ENCODE measurements at regions of chr10 and their contacts with region 1.

Region 1: DNA sequence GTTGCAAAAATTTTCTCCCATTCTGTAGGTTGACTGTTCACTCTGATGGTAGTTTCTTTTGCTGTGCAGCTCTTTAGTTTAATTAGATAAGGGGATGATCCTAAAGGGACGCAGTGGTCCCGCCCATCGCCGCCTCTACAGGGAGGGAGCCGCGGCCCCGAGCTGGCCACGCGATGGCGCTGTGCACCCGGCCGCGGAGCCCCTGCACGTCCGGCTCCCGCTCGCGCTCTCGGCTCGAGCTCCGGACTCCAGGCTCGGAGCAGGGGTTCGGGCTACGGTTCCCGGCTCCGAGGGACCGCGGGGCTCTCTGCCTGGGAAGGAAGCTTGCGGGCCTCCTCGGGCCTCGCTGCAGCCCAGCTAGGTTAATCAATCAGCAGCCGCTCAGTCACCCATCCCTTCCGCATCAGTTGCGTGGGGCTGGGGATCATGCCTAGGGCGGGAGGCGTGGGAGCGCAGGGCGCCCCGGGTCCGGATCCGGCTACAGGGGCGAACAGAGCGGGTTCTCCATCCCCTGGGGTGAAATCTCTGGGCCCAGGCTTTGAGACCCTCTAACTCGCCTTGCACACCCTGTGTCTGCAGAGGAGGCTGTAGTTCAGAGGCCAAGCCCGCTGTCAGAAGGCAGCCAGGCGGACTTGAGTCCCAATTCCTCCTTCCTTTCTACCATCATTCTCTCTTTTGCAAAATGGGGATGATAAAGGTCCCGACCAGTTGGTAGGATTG is 97.9 kb downstream of the WDR11 start:
- DNase-seq: peak; percentile 73
- H3K4me3 Mint-ChIP-seq: no peak overlapping the region
- H3K27ac Mint-ChIP-seq: no peak overlapping the region
- H3K4me1 Mint-ChIP-seq: peaks cover 10% of the 10 kb centered on the region
- H3K27me3 Mint-ChIP-seq: no peaks in the 10 kb centered on the region
- CTCF ChIP-seq: peak; percentile 92

Region 2: DNA sequence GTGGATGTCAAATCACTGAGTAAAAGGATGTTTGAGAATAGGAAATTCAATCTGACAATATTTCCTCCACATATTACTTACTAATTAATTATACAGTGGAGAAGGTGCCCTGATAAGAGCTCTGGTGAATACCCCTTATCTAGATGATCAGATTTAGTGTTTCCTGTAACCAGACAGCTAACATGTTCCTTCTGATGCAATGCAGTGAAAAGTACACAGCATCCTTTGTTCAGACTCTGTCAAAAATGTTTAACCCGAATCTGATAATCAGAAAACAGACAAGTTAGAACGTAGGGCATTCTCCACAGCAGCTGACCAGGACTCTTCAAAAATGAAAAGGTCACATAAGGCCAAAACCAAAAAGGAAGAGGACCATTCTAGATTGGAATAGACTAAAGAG is 51.7 kb before region 1 on chr10:
- CTCF ChIA-PET with region 1: no interaction called
- POLR2A ChIA-PET with region 1: no interaction called
- intact Hi-C with region 1: no loop called
- DNase-seq: no peak
- H3K4me3 Mint-ChIP-seq: no peak overlapping the region
- H3K27ac Mint-ChIP-seq: no peak overlapping the region
- H3K4me1 Mint-ChIP-seq: no peaks in the 10 kb centered on the region
- H3K27me3 Mint-ChIP-seq: no peaks in the 10 kb centered on the region
- CTCF ChIP-seq: no peak

Region 3: GRCh38 chr10:121076776-121077715 is 128.0 kb after region 1 on chr10:
- CTCF ChIA-PET with region 1: interaction called, 8 read pairs
- POLR2A ChIA-PET with region 1: interaction called, 4 read pairs
- intact Hi-C with region 1: loop called (anchors 5 kb)
- DNase-seq: peak; percentile 96
- H3K4me3 Mint-ChIP-seq: peak overlapping the region; percentile 49
- H3K27ac Mint-ChIP-seq: peak overlapping the region; percentile 49
- H3K4me1 Mint-ChIP-seq: peaks cover 41% of the 10 kb centered on the region
- H3K27me3 Mint-ChIP-seq: no peaks in the 10 kb centered on the region
- CTCF ChIP-seq: no peak

Region 4: DNA sequence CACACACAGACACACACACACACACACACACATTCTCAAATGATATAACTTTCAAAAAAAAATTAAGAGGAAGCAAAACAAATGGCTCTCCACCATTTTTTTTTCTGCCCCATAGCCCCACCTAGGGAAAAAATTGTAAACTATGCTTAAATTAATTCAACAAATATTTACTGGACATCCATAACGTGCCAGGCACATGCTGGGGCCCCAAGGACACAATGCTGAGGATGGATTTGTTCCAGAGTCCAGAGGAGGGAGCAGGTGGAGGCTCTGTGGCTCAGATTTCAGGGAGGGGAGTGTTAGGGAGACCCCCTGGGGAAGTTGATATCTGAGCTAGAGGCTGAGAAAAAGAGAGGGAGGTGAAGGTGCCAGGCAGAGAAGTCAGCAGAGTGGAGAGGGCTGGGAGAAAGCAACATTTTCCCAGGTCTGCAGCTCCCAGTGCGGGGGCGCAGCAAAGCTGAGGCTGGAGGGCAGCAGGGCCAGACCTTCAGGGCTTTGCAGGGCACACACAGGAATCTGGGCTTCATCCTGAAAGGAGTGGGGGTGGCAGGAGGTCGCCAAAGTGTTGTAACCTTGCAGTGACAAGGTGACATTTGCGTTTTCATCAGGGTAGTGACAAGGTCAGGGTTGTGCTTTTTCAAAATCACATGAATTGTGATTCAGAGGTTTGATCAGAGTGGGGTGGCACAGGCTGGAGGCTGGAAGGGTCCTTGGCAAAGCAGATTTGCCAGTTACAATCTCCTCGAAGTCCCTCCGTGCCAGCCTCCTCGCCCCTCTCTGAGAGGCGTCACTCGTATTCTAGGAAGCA is 163.7 kb after region 1 on chr10:
- CTCF ChIA-PET with region 1: interaction called, 3 read pairs
- POLR2A ChIA-PET with region 1: no interaction called
- intact Hi-C with region 1: loop called (anchors 1 kb)
- DNase-seq: peak; percentile 34
- H3K4me3 Mint-ChIP-seq: no peak overlapping the region
- H3K27ac Mint-ChIP-seq: peak overlapping the region; percentile 68
- H3K4me1 Mint-ChIP-seq: peaks cover 15% of the 10 kb centered on the region
- H3K27me3 Mint-ChIP-seq: no peaks in the 10 kb centered on the region
- CTCF ChIP-seq: no peak

Region 5: GRCh38 chr10:121310151-121310711 is 361.2 kb after region 1 on chr10:
- CTCF ChIA-PET with region 1: interaction called, 3 read pairs
- POLR2A ChIA-PET with region 1: no interaction called
- intact Hi-C with region 1: loop called (anchors 2 kb)
- DNase-seq: no peak
- H3K4me3 Mint-ChIP-seq: no peak overlapping the region
- H3K27ac Mint-ChIP-seq: no peak overlapping the region
- H3K4me1 Mint-ChIP-seq: peaks cover 17% of the 10 kb centered on the region
- H3K27me3 Mint-ChIP-seq: no peaks in the 10 kb centered on the region
- CTCF ChIP-seq: no peak